HCT116 (cell line): ENCODE measurements at regions of chr16 and their contacts with region 1.

Region 1: GRCh38 chr16:10737068-10737625 is 6.5 kb upstream of the NUBP1 start:
- DNase-seq: peak; percentile 50
- ATAC-seq: peak; percentile 54; the same call in 1 of the 2 replicates
- H3K4me3 ChIP-seq: no peak overlapping the region
- H3K27ac ChIP-seq: peak overlapping the region; percentile 34; the same call in 1 of the 2 replicates
- H3K4me1 ChIP-seq: peaks cover 22 to 36% of the 10 kb centered on the region in 2 experiments
- H3K27me3 ChIP-seq: no peaks in the 10 kb centered on the region
- CTCF ChIP-seq: peak; percentile 86 to 95 (median 94)
- POLR2A ChIP-seq: no peak
- RAD21 ChIP-seq: peak; percentile 95

Region 2: GRCh38 chr16:8982816-8983215 is 1754.3 kb before region 1 on chr16:
- CTCF ChIA-PET with region 1: no interaction called
- POLR2A ChIA-PET with region 1: no interaction called
- RAD21 ChIA-PET with region 1: no interaction called
- intact Hi-C with region 1: no loop called
- DNase-seq: no peak
- ATAC-seq: no peak
- H3K4me3 ChIP-seq: no peak overlapping the region
- H3K27ac ChIP-seq: no peak overlapping the region
- H3K4me1 ChIP-seq: peaks cover 9 to 11% of the 10 kb centered on the region in 2 experiments; a peak in 3 of 4 replicates
- H3K27me3 ChIP-seq: no peaks in the 10 kb centered on the region
- CTCF ChIP-seq: no peak
- POLR2A ChIP-seq: no peak
- RAD21 ChIP-seq: no peak

Region 3: GRCh38 chr16:10016752-10017151 is 720.4 kb before region 1 on chr16:
- CTCF ChIA-PET with region 1: no interaction called
- POLR2A ChIA-PET with region 1: no interaction called
- RAD21 ChIA-PET with region 1: no interaction called
- intact Hi-C with region 1: no loop called
- DNase-seq: no peak
- ATAC-seq: no peak
- H3K4me3 ChIP-seq: no peak overlapping the region
- H3K27ac ChIP-seq: no peak overlapping the region
- H3K4me1 ChIP-seq: no peaks in the 10 kb centered on the region
- H3K27me3 ChIP-seq: peaks cover 43% of the 10 kb centered on the region
- CTCF ChIP-seq: no peak
- POLR2A ChIP-seq: no peak
- RAD21 ChIP-seq: no peak

Region 4: DNA sequence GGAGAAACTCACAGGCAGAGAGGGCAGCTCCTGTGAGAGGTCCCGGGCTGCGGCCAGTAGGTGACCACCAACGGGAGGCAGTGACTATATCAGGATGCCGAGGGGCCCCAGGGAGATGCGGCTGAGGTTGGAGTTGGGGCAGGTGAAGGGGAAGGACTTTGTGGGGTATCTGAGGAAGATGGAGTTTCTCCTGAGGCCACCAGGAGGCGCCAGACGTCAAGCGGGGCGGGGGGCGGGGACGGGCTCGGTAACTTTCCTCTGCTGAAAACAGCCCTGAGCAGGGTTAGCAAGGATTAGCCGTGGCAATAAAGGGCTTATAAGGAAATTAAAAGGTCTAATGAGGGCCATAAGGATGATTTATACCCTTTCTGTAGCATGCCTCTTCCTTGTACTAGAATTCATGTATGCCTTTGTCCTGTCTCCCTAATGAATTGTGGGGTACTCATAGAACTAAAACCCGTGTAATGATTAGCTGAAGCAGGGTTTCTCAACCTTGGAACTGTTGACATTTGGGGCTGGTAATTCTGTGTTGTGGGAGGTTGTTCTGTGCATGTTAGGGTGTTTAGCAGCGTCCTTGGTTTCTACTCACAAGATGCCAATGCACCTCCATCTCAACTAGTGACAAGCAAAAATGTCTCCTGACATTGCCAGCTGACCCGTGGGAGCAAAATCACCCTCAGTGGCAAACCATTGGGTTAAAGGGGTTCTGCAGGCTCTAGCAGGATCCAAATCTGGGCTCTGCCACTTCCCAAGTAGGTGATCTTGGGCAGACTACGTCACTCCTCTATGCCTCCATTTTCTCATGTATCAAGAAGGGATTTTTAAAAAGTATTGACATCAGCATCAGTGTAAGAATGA is 480.1 kb before region 1 on chr16:
- CTCF ChIA-PET with region 1: interaction called, 3 read pairs
- POLR2A ChIA-PET with region 1: no interaction called
- RAD21 ChIA-PET with region 1: no interaction called
- intact Hi-C with region 1: loop called (anchors 2 kb)
- DNase-seq: no peak
- ATAC-seq: peak; percentile 92
- H3K4me3 ChIP-seq: no peak overlapping the region
- H3K27ac ChIP-seq: no peak overlapping the region
- H3K4me1 ChIP-seq: peaks cover 0 to 4% of the 10 kb centered on the region in 2 experiments; a peak in 1 of 4 replicates
- H3K27me3 ChIP-seq: no peaks in the 10 kb centered on the region
- CTCF ChIP-seq: peak; percentile 16 to 64 (median 62); a peak in 5 of 6 replicates
- POLR2A ChIP-seq: no peak
- RAD21 ChIP-seq: peak; percentile 48

Region 5: DNA sequence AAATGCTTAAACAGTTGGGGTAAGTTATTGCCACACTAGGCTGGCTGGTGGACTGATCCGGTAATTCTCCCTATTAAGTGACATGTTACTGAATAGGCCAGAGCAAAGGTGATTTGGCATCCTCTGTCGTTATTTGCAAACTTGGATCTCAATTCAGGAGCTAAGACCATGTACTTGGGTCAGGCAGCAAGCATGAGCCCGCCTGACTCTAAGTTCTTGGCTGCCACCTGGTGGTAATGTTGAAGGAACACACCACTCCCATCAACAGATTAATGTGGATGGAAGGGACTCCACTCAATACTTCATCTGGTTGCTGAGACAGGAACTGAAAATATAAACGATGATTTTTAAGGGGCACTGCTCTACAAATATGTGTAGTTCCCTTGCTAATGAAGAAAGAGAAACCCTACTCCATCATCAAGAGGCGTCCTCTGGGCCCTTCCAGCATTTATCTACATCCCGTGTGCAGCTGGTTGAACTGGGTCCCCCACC is 227.6 kb before region 1 on chr16:
- CTCF ChIA-PET with region 1: interaction called, 69 read pairs
- POLR2A ChIA-PET with region 1: no interaction called
- RAD21 ChIA-PET with region 1: interaction called, 3 to 7 read pairs
- intact Hi-C with region 1: loop called (anchors 1 kb)
- DNase-seq: peak; percentile 71
- ATAC-seq: peak; percentile 99
- H3K4me3 ChIP-seq: no peak overlapping the region
- H3K27ac ChIP-seq: no peak overlapping the region
- H3K4me1 ChIP-seq: no peaks in the 10 kb centered on the region
- H3K27me3 ChIP-seq: no peaks in the 10 kb centered on the region
- CTCF ChIP-seq: peak; percentile 75 to 88 (median 78)
- POLR2A ChIP-seq: no peak
- RAD21 ChIP-seq: peak; percentile 95

Region 6: GRCh38 chr16:10579965-10580882 is 156.9 kb before region 1 on chr16 and contains the start of gene EMP2:
- CTCF ChIA-PET with region 1: interaction called, 4 read pairs
- POLR2A ChIA-PET with region 1: no interaction called
- RAD21 ChIA-PET with region 1: no interaction called
- intact Hi-C with region 1: loop called (anchors 5 kb)
- DNase-seq: peak; percentile 36
- ATAC-seq: peak; percentile 90
- H3K4me3 ChIP-seq: peak within 1 kb of the TSS; percentile 68 to 83
- H3K27ac ChIP-seq: peak within 1 kb of the TSS; percentile 88
- H3K4me1 ChIP-seq: peaks cover 38 to 47% of the 10 kb centered on the region in 2 experiments
- H3K27me3 ChIP-seq: no peaks in the 10 kb centered on the region
- CTCF ChIP-seq: peak; percentile 63 to 82 (median 71); a peak in 5 of 6 replicates
- POLR2A ChIP-seq: no peak
- RAD21 ChIP-seq: peak; percentile 51; the same call in 1 of the 2 replicates
- total RNA-seq, gene EMP2: 32.6 TPM

Region 7: GRCh38 chr16:10806698-10807097 is 69.6 kb after region 1 on chr16:
- CTCF ChIA-PET with region 1: no interaction called
- POLR2A ChIA-PET with region 1: no interaction called
- RAD21 ChIA-PET with region 1: no interaction called
- intact Hi-C with region 1: no loop called
- DNase-seq: no peak
- ATAC-seq: no peak
- H3K4me3 ChIP-seq: no peak overlapping the region
- H3K27ac ChIP-seq: no peak overlapping the region
- H3K4me1 ChIP-seq: no peaks in the 10 kb centered on the region
- H3K27me3 ChIP-seq: 0 out of 2 replicates have a peak, but pooled peaks cover 2% of the 10 kb centered on the region
- CTCF ChIP-seq: no peak
- POLR2A ChIP-seq: no peak
- RAD21 ChIP-seq: no peak

Region 8: DNA sequence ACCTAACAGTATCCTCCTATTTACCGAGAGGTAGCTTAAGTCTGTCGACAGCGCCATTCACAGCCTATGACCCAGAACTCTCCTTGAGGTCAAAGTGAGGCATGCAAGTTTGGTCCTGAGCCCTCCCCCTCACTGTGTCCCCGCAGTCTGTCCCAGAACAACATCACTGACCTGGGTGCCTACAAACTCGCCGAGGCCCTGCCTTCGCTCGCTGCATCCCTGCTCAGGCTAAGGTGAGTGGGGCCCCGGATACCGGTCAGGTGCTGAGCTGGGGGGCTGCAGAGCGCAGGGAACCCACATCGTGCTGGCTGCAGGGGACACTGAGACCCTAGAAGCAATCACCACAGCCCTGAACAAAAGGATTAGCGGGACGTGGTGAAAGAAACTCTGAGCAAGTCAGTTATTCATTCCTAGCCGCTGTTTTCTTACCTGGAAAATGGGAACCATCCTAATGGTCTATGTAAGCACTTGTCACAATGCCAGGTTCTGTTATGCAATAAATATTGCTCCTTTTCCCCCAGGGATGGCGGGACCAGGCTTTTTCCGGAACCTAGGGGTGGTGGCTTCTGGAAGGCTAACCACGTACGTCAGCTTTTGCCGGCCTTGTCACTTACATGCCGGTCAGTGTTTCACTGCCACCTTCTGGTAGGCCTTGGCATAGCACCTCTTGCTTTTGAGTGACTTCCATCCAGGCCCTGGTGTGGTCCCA is 181.3 kb after region 1 on chr16:
- CTCF ChIA-PET with region 1: interaction called, 12 read pairs
- POLR2A ChIA-PET with region 1: no interaction called
- RAD21 ChIA-PET with region 1: interaction called, 3 to 4 read pairs
- intact Hi-C with region 1: no loop called
- DNase-seq: peak; percentile 88
- ATAC-seq: peak; percentile 96
- H3K4me3 ChIP-seq: peak overlapping the region; percentile 8 to 19; a peak in 2 of 4 replicates
- H3K27ac ChIP-seq: no peak overlapping the region; the same call in 1 of the 2 replicates
- H3K4me1 ChIP-seq: peaks cover 7 to 29% of the 10 kb centered on the region in 2 experiments; a peak in 3 of 4 replicates
- H3K27me3 ChIP-seq: no peaks in the 10 kb centered on the region
- CTCF ChIP-seq: peak; percentile 80 to 99 (median 95)
- POLR2A ChIP-seq: no peak
- RAD21 ChIP-seq: peak; percentile 95

Region 9: GRCh38 chr16:11010575-11011221 is 273.6 kb after region 1 on chr16:
- CTCF ChIA-PET with region 1: no interaction called
- POLR2A ChIA-PET with region 1: no interaction called
- RAD21 ChIA-PET with region 1: no interaction called
- intact Hi-C with region 1: no loop called
- DNase-seq: no peak
- ATAC-seq: no peak
- H3K4me3 ChIP-seq: no peak overlapping the region
- H3K27ac ChIP-seq: no peak overlapping the region
- H3K4me1 ChIP-seq: peaks cover 2 to 3% of the 10 kb centered on the region in 2 experiments; a peak in 3 of 4 replicates
- H3K27me3 ChIP-seq: no peaks in the 10 kb centered on the region
- CTCF ChIP-seq: no peak
- POLR2A ChIP-seq: no peak
- RAD21 ChIP-seq: no peak